Endothelial cell of umbilical vein (primary cell): ENCODE measurements at regions of chr9 and their contacts with region 1.

Region 1: GRCh38 chr9:34126207-34127034 is at the start of gene DCAF12:
- DNase-seq: peak; percentile 95
- H3K4me3 ChIP-seq: peak within 1 kb of the TSS; percentile 64 to 82 (median 75)
- H3K27ac ChIP-seq: peak within 1 kb of the TSS; percentile 49
- H3K4me1 ChIP-seq: peaks cover 15% of the 10 kb centered on the region
- H3K27me3 ChIP-seq: no peaks in the 10 kb centered on the region
- CTCF ChIP-seq: no peak
- POLR2A ChIP-seq: peak; percentile 89
- total RNA-seq, gene DCAF12: 28.2 and 28.4 TPM in 2 replicates

Region 2: GRCh38 chr9:34098307-34098706 is 28.1 kb before region 1 on chr9:
- CTCF ChIA-PET with region 1: no interaction called
- POLR2A ChIA-PET with region 1: no interaction called
- dilution Hi-C with region 1: no loop called
- intact Hi-C with region 1: no loop called
- DNase-seq: no peak
- H3K4me3 ChIP-seq: no peak overlapping the region
- H3K27ac ChIP-seq: no peak overlapping the region
- H3K4me1 ChIP-seq: no peaks in the 10 kb centered on the region
- H3K27me3 ChIP-seq: no peaks in the 10 kb centered on the region
- CTCF ChIP-seq: no peak
- POLR2A ChIP-seq: no peak

Region 3: DNA sequence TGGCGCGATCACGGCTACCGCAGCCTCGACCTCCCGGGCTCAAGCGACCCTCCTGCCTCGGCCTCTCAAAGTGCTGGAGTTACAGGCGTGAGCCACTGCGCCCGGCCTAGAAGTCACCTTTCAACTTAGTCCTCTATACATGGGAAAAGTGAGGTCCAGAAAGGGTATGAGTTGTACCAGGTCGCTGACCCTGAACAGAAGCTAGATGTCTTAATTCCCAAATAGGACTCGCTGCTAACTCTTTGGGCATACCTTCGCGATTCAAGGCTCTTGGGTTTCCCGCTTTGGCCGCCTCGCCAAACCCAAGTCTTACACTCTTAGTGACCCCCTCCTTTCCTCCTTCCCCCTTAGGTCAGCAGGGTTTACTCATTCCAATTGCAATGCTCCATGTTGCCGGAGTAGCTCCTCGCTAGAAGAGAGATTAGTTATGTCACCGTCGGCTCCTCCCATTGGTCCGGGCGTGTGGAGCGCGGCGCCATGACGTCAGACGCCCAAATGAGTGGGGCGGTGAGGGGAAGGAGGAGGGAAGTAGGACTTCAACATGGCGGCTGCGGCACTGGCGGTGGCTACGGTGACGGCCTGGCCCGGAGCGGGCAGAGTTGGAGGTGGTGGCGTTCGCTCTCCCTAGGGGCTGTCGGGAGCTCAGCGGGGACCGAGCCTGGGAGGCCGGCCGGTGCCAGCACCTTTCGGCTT is 52.2 kb after region 1 on chr9 and contains the start of gene UBAP1:
- CTCF ChIA-PET with region 1: interaction called, 3 read pairs
- POLR2A ChIA-PET with region 1: no interaction called
- dilution Hi-C with region 1: no loop called
- intact Hi-C with region 1: loop called (anchors 1 kb)
- DNase-seq: peak; percentile 99
- H3K4me3 ChIP-seq: peak within 1 kb of the TSS; percentile 51 to 87 (median 79)
- H3K27ac ChIP-seq: peak within 1 kb of the TSS; percentile 58
- H3K4me1 ChIP-seq: no peaks in the 10 kb centered on the region
- H3K27me3 ChIP-seq: no peaks in the 10 kb centered on the region
- CTCF ChIP-seq: no peak
- POLR2A ChIP-seq: peak; percentile 64
- total RNA-seq, gene UBAP1: 38.0 and 38.8 TPM in 2 replicates

Region 4: GRCh38 chr9:34185778-34186551 is 59.5 kb after region 1 on chr9:
- CTCF ChIA-PET with region 1: no interaction called
- POLR2A ChIA-PET with region 1: no interaction called
- dilution Hi-C with region 1: no loop called
- intact Hi-C with region 1: loop called (anchors 2 kb)
- DNase-seq: peak; percentile 92
- H3K4me3 ChIP-seq: peak overlapping the region in 1 of 3 experiments; percentile 34
- H3K27ac ChIP-seq: peak overlapping the region; percentile 50
- H3K4me1 ChIP-seq: peaks cover 20% of the 10 kb centered on the region
- H3K27me3 ChIP-seq: no peaks in the 10 kb centered on the region
- CTCF ChIP-seq: no peak
- POLR2A ChIP-seq: peak; percentile 63